ENCODE measurements at regions of chr2 and their contacts with region 1.

Region 1: GRCh38 chr2:179239195-179239594 is 25.4 kb downstream of the SESTD1 start:
- DNase-seq: no peak
- ATAC-seq: peak; percentile 61
- H3K4me3 Mint-ChIP-seq: peak overlapping the region; percentile 0
- H3K27ac Mint-ChIP-seq: peak overlapping the region; percentile 19
- H3K4me1 Mint-ChIP-seq: peaks cover 79% of the 10 kb centered on the region
- H3K27me3 Mint-ChIP-seq: no peaks in the 10 kb centered on the region
- CTCF ChIP-seq: no peak

Region 2: DNA sequence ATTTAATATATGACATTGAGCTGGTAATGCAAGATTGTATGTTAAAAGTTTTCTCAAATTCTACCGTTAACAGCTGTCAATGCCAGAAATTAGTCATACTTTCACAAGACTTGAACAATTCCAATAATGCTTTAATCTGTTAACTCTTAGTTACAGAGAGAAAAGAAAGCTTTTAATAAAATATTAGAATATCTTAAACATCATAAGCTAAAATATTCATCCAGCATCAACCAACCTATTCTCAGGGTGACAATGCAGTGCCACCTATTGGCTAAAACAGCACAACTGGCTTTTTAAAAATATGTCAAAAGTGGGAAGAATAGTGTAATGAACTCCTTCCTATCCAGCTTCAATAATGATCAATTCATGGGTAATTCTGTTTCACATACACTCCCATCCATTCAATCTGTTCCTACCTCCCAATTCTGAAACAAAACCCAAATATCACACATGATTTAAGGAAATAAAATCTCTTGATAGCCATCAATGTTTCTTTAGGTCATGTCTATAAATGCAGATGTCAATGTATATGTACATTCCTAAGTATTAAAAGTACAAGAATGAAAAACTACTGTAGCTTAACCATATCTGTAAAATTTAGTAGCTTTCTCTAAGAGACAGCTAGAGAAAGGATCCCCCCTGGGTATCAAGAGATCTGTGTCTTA is 109.5 kb before region 1 on chr2:
- CTCF ChIA-PET with region 1: no interaction called
- POLR2A ChIA-PET with region 1: no interaction called
- intact Hi-C with region 1: no loop called
- DNase-seq: no peak
- ATAC-seq: no peak
- H3K4me3 Mint-ChIP-seq: no peak overlapping the region
- H3K27ac Mint-ChIP-seq: no peak overlapping the region
- H3K4me1 Mint-ChIP-seq: peaks cover 2% of the 10 kb centered on the region
- H3K27me3 Mint-ChIP-seq: no peaks in the 10 kb centered on the region
- CTCF ChIP-seq: no peak

Region 3: GRCh38 chr2:179272406-179273192 is 33.4 kb after region 1 on chr2:
- CTCF ChIA-PET with region 1: no interaction called
- POLR2A ChIA-PET with region 1: interaction called, 4 read pairs
- intact Hi-C with region 1: loop called (anchors 5 kb)
- DNase-seq: no peak
- ATAC-seq: no peak
- H3K4me3 Mint-ChIP-seq: no peak overlapping the region
- H3K27ac Mint-ChIP-seq: no peak overlapping the region
- H3K4me1 Mint-ChIP-seq: peaks cover 42% of the 10 kb centered on the region
- H3K27me3 Mint-ChIP-seq: no peaks in the 10 kb centered on the region
- CTCF ChIP-seq: no peak

Region 4: GRCh38 chr2:179677077-179677688 is 438.0 kb after region 1 on chr2:
- CTCF ChIA-PET with region 1: no interaction called
- POLR2A ChIA-PET with region 1: no interaction called
- intact Hi-C with region 1: no loop called
- DNase-seq: no peak
- ATAC-seq: no peak
- H3K4me3 Mint-ChIP-seq: no peak overlapping the region
- H3K27ac Mint-ChIP-seq: no peak overlapping the region
- H3K4me1 Mint-ChIP-seq: no peaks in the 10 kb centered on the region
- H3K27me3 Mint-ChIP-seq: peaks cover 2% of the 10 kb centered on the region
- CTCF ChIP-seq: no peak

Measured in activated B cell treated with CpG ODN at 0.5 μM for 24 hours (primary cell).